Endothelial cell of umbilical vein (primary cell): ENCODE measurements at regions of chr20 and their contacts with region 1.

Region 1: DNA sequence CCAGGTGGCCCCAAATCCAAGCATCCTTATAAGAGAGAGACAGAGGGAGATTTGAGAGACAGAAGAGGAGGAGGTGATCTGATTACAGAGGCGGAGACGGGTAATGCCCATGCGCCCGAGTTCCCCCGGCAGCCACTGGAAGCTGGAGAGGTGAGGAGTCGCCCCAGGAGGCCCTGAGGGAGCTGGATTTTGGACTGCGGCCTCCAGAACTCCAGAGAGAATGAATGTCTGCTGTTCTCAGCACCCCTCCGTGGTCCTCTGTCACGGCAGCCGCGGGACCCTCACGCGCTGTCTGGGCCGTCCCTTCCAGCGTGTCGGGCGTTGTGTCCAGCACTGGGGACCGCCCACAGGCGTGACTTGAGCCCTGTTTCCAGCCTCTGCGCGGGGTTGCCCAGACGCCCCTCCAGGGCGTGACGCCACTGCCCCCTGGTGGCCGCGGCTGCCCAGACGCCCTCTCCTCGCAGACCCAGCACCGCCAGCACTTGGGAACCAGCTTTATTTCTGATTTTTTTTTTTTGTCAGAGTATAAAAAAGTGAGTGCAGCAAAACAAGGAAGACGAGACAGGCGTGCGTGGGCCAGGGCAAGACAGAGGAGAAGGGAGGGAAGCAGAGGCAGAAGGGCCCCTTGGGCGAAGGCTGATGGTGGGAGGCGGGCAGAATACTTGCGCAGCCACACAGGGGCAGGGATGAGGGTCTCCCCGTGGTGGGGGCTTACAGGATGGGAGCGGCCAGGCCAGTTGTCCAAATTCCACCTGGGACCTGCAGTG is 4.1 kb upstream of the ZNF512B start:
- DNase-seq: peak; percentile 87
- H3K4me3 ChIP-seq: peak overlapping the region in 2 of 3 experiments; percentile 7 to 35
- H3K27ac ChIP-seq: no peak overlapping the region
- H3K4me1 ChIP-seq: peaks cover 23% of the 10 kb centered on the region
- H3K27me3 ChIP-seq: no peaks in the 10 kb centered on the region
- CTCF ChIP-seq: peak; percentile 99
- POLR2A ChIP-seq: peak; percentile 63

Region 2: GRCh38 chr20:63495741-63496595 is 477.9 kb before region 1 on chr20:
- CTCF ChIA-PET with region 1: interaction called, 16 read pairs
- POLR2A ChIA-PET with region 1: no interaction called
- dilution Hi-C with region 1: no loop called
- intact Hi-C with region 1: loop called (anchors 2 kb)
- DNase-seq: peak; percentile 44
- H3K4me3 ChIP-seq: no peak overlapping the region
- H3K27ac ChIP-seq: no peak overlapping the region
- H3K4me1 ChIP-seq: no peaks in the 10 kb centered on the region
- H3K27me3 ChIP-seq: no peaks in the 10 kb centered on the region
- CTCF ChIP-seq: peak; percentile 92 to 96
- POLR2A ChIP-seq: no peak

Region 3: DNA sequence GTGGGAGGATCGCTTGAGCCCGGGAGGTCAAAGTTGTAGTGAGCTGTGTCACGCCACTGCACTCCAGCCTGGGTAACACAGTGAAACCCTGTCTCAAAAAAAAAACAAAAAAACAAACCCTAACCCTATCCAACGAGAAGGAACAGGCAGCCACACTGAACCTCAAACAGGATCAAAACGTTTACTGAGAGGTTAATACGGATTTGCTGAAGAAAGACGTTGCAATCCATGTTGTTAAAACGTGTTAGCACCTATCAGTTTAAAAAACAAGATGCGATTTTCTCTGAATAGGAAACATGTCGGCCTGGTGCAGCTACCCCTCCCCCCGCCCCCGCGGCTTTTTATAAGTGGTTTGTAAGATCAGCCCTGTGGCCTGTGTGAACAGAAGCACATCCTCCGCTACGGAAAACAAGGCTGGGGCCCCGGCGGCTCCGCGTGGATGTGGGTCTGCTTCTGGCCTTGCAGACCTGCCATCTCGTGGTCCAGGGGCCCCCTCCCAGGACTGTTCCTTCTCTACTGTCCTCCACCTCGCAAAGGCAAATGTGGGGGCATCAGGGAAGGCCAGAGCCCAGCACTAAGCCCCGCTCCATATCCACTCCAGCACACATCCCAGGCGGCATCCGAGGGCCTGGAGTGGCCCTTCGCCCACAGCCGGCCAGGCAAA is 222.9 kb before region 1 on chr20:
- CTCF ChIA-PET with region 1: no interaction called
- POLR2A ChIA-PET with region 1: no interaction called
- dilution Hi-C with region 1: no loop called
- intact Hi-C with region 1: no loop called
- DNase-seq: no peak
- H3K4me3 ChIP-seq: no peak overlapping the region
- H3K27ac ChIP-seq: no peak overlapping the region
- H3K4me1 ChIP-seq: no peaks in the 10 kb centered on the region
- H3K27me3 ChIP-seq: no peaks in the 10 kb centered on the region
- CTCF ChIP-seq: no peak
- POLR2A ChIP-seq: no peak

Region 4: DNA sequence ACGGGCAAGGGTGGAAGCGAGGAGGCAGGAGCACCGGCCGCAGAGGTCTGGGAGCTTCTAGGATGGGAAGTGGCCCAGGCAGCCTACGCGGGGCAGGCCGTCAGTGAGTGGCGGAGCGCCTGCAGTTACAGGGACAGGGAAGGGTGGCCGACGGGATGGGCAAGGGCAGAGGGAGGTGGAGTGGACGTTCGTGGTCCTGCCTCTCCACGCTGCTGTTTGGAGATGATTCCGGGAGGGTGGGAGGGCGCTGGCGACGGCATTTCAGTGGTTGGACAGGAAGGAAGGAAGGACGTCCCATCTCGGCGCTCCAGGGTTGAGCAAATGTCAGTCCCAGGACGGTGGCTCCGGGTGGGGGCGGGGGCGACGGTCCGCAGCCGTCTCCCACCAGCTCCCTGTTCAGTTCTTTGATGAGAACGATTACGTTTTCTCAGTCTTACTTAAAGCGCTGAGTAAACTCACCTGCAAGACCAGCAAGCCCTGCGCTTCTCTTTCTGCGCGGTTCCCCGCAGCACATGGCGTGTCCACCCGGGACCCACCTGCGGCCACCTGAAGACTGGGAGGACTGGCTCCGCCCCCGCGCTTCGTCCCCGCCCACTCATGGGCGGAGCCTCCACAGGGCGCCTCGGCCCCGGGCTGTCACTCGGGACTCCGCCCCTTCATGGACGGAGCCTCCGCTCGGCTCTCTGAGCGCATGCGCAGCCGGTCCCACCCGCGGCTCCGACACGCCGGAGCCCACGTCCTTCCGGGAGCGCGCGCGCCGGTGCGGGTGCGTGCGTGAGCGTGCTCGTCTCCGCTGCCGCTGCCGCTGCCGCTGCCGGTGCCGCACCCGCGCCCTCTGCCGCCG is 79.2 kb before region 1 on chr20 and contains the start of gene DNAJC5:
- CTCF ChIA-PET with region 1: interaction called, 11 read pairs
- POLR2A ChIA-PET with region 1: no interaction called
- dilution Hi-C with region 1: no loop called
- intact Hi-C with region 1: no loop called
- DNase-seq: peak; percentile 91
- H3K4me3 ChIP-seq: peak within 1 kb of the TSS; percentile 67 to 98 (median 86)
- H3K27ac ChIP-seq: peak within 1 kb of the TSS; percentile 66
- H3K4me1 ChIP-seq: peaks cover 14% of the 10 kb centered on the region
- H3K27me3 ChIP-seq: no peaks in the 10 kb centered on the region
- CTCF ChIP-seq: no peak
- POLR2A ChIP-seq: no peak
- total RNA-seq, gene DNAJC5: 58.7 and 60.3 TPM in 2 replicates

Region 5: GRCh38 chr20:63911176-63911575 is 62.6 kb before region 1 on chr20:
- CTCF ChIA-PET with region 1: interaction called, 24 read pairs
- POLR2A ChIA-PET with region 1: no interaction called
- dilution Hi-C with region 1: no loop called
- intact Hi-C with region 1: loop called (anchors 1 kb)
- DNase-seq: no peak
- H3K4me3 ChIP-seq: no peak overlapping the region
- H3K27ac ChIP-seq: no peak overlapping the region
- H3K4me1 ChIP-seq: no peaks in the 10 kb centered on the region
- H3K27me3 ChIP-seq: no peaks in the 10 kb centered on the region
- CTCF ChIP-seq: no peak
- POLR2A ChIP-seq: no peak

Region 6: GRCh38 chr20:63955827-63956663 is 17.8 kb before region 1 on chr20 and contains the start of gene UCKL1:
- CTCF ChIA-PET with region 1: interaction called, 9 read pairs
- POLR2A ChIA-PET with region 1: interaction called, 6 read pairs
- dilution Hi-C with region 1: no loop called
- intact Hi-C with region 1: loop called (anchors 1 kb)
- DNase-seq: peak; percentile 93
- H3K4me3 ChIP-seq: peak within 1 kb of the TSS; percentile 38 to 78 (median 76)
- H3K27ac ChIP-seq: peak within 1 kb of the TSS; percentile 42
- H3K4me1 ChIP-seq: peaks cover 10% of the 10 kb centered on the region
- H3K27me3 ChIP-seq: no peaks in the 10 kb centered on the region
- CTCF ChIP-seq: no peak
- POLR2A ChIP-seq: peak; percentile 89
- total RNA-seq, gene UCKL1: 51.1 TPM in 2 replicates

Region 7: GRCh38 chr20:64053841-64054661 is 80.2 kb after region 1 on chr20:
- CTCF ChIA-PET with region 1: interaction called, 8 read pairs
- POLR2A ChIA-PET with region 1: no interaction called
- dilution Hi-C with region 1: no loop called
- intact Hi-C with region 1: loop called (anchors 2 kb)
- DNase-seq: peak; percentile 90
- H3K4me3 ChIP-seq: peak overlapping the region in 2 of 3 experiments; percentile 9 to 21
- H3K27ac ChIP-seq: peak overlapping the region; percentile 83
- H3K4me1 ChIP-seq: peaks cover 74% of the 10 kb centered on the region
- H3K27me3 ChIP-seq: no peaks in the 10 kb centered on the region
- CTCF ChIP-seq: peak; percentile 40 to 48
- POLR2A ChIP-seq: peak; percentile 93